CD8-positive, alpha-beta T cell (primary cell): ENCODE measurements at regions of chr16 and their contacts with region 1.

Region 1: GRCh38 chr16:85151603-85152413 is 39.5 kb upstream of the CIBAR2 start:
- DNase-seq: peak in 1 of 9 experiments; percentile 10
- ATAC-seq: no peak
- H3K4me3 ChIP-seq: no peak overlapping the region
- H3K4me3 Mint-ChIP-seq: no peak overlapping the region
- H3K27ac ChIP-seq: no peak overlapping the region
- H3K27ac Mint-ChIP-seq: no peak overlapping the region
- H3K4me1 ChIP-seq: no peaks in the 10 kb centered on the region
- H3K4me1 Mint-ChIP-seq: peaks cover 2% of the 10 kb centered on the region
- H3K27me3 ChIP-seq: no peaks in the 10 kb centered on the region
- H3K27me3 Mint-ChIP-seq: no peaks in the 10 kb centered on the region
- CTCF ChIP-seq: no peak

Region 2: GRCh38 chr16:84228321-84228838 is 923.4 kb before region 1 on chr16:
- CTCF ChIA-PET with region 1: no interaction called
- POLR2A ChIA-PET with region 1: no interaction called
- intact Hi-C with region 1: loop called in 1 of 2 experiments (anchors 10 kb)
- DNase-seq: no peak
- ATAC-seq: no peak
- H3K4me3 ChIP-seq: no peak overlapping the region
- H3K4me3 Mint-ChIP-seq: no peak overlapping the region
- H3K27ac ChIP-seq: no peak overlapping the region
- H3K27ac Mint-ChIP-seq: no peak overlapping the region
- H3K4me1 ChIP-seq: no peaks in the 10 kb centered on the region
- H3K4me1 Mint-ChIP-seq: no peaks in the 10 kb centered on the region
- H3K27me3 ChIP-seq: no peaks in the 10 kb centered on the region
- H3K27me3 Mint-ChIP-seq: peaks cover 10% of the 10 kb centered on the region
- CTCF ChIP-seq: no peak